ENCODE measurements at regions of chr15 and their contacts with region 1.

Region 1: GRCh38 chr15:72252663-72253299 is 19.6 kb downstream of the PARP6 start:
- DNase-seq: no peak
- ATAC-seq: no peak
- H3K4me3 ChIP-seq: no peak overlapping the region
- H3K4me3 Mint-ChIP-seq: no peak overlapping the region
- H3K27ac ChIP-seq: no peak overlapping the region
- H3K27ac Mint-ChIP-seq: no peak overlapping the region
- H3K4me1 ChIP-seq: no peaks in the 10 kb centered on the region
- H3K4me1 Mint-ChIP-seq: peaks cover 0 to 7% (median 0%) of the 10 kb centered on the region in 7 donors
- H3K27me3 ChIP-seq: no peaks in the 10 kb centered on the region
- H3K27me3 Mint-ChIP-seq: no peaks in the 10 kb centered on the region

Region 2: GRCh38 chr15:72231066-72231846 is 21.5 kb before region 1 on chr15 and contains the start of gene PKM:
- CTCF ChIA-PET with region 1: no interaction called
- POLR2A ChIA-PET with region 1: interaction called, 11 read pairs
- intact Hi-C with region 1: no loop called
- DNase-seq: peak; percentile 82 to 99 (median 88)
- ATAC-seq: peak; percentile 65
- H3K4me3 ChIP-seq: peak within 1 kb of the TSS; percentile 73
- H3K4me3 Mint-ChIP-seq: peak within 1 kb of the TSS; percentile 95 to 100 (median 99)
- H3K27ac ChIP-seq: peak within 1 kb of the TSS; percentile 73
- H3K27ac Mint-ChIP-seq: peak within 1 kb of the TSS; percentile 89 to 99 (median 95)
- H3K4me1 ChIP-seq: peaks cover 34 to 39% of the 10 kb centered on the region in 2 donors
- H3K4me1 Mint-ChIP-seq: peaks cover 40 to 55% (median 50%) of the 10 kb centered on the region in 7 donors
- H3K27me3 ChIP-seq: no peaks in the 10 kb centered on the region
- H3K27me3 Mint-ChIP-seq: peaks cover 0 to 3% (median 0%) of the 10 kb centered on the region in 5 donors
- total RNA-seq, gene PKM: 237 to 1,627 (median 329) TPM

Region 3: GRCh38 chr15:72339777-72340177 is 87.0 kb after region 1 on chr15:
- CTCF ChIA-PET with region 1: no interaction called
- POLR2A ChIA-PET with region 1: no interaction called
- intact Hi-C with region 1: no loop called
- DNase-seq: no peak
- ATAC-seq: peak; percentile 67
- H3K4me3 ChIP-seq: no peak overlapping the region
- H3K4me3 Mint-ChIP-seq: no peak overlapping the region
- H3K27ac ChIP-seq: no peak overlapping the region
- H3K27ac Mint-ChIP-seq: peak overlapping the region in 2 of 9 donors; percentile 4 to 23
- H3K4me1 ChIP-seq: no peaks in the 10 kb centered on the region
- H3K4me1 Mint-ChIP-seq: peaks cover 0 to 6% (median 0%) of the 10 kb centered on the region in 7 donors
- H3K27me3 ChIP-seq: no peaks in the 10 kb centered on the region
- H3K27me3 Mint-ChIP-seq: no peaks in the 10 kb centered on the region